Cardiac septum (tissue), 1 donor: ENCODE measurements at regions of chr5 and their contacts with region 1.

Region 1: GRCh38 chr5:16489322-16489791 is 23.8 kb upstream of the ZNF622 start:
- DNase-seq: no peak

Region 2: DNA sequence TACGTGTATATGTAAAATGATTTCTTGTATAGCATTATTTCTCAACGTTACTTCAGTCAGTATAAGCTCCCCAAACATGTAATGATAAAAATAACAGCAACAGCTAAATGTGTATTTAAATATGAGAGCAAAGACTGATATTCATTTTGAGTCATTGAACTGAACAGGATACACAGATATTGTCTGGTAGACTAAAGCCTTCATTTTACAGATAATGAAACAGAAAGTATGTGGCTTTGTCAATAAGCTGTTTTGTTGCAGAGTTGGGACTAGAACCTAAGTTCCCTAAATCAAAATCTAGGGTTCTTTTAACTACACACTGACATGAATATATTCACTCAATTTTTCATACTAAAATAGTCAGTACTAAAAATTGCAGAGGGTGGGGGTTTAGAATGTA is 229.4 kb before region 1 on chr5:
- intact Hi-C with region 1: no loop called
- DNase-seq: no peak

Region 3: GRCh38 chr5:16465544-16466466 is 23.6 kb before region 1 on chr5 and contains the start of gene ZNF622:
- intact Hi-C with region 1: loop called (anchors 2 kb)
- DNase-seq: peak; percentile 97
- total RNA-seq, gene ZNF622: 49.0 TPM

Region 4: GRCh38 chr5:16539169-16539721 is 49.9 kb after region 1 on chr5:
- intact Hi-C with region 1: loop called (anchors 2 kb)
- DNase-seq: peak; percentile 82

Region 5: GRCh38 chr5:16666883-16667398 is 177.6 kb after region 1 on chr5:
- intact Hi-C with region 1: loop called (anchors 2 kb)
- DNase-seq: no peak

Region 6: GRCh38 chr5:16759147-16759773 is 269.9 kb after region 1 on chr5:
- intact Hi-C with region 1: no loop called
- DNase-seq: no peak

Region 7: DNA sequence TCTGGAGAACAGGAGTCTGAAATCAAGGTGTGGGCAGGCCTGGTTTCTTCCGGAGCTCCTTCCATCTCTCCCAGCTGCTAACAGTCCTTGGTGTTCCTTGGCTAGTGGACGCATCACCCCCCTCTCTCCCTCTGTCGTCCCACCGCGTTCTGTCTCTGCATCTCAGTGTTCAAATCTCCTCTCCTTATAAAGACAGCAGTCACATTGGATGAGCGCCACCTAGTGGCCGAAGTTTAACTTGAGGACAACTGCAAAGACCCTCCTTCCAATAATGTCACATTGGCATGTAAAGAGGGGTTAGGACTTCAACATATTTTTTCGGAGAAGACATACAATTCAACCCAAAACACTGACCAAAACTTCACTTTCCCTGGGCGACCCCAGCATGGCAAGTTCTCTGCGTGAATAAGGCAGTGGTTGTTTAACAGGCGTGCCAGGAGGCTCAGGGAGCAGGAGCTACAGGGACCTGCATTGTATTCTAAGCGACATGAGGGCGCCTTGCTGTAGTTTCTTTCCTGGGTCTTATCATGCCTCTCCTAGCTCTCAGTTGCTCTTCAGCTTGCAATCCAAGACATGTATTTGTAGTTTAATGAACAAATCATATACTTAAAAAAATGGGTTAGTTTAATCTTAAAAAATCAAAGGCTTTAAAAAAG is 700.2 kb after region 1 on chr5:
- intact Hi-C with region 1: loop called (anchors 10 kb)
- DNase-seq: no peak